CD14-positive monocyte (primary cell): ENCODE measurements at regions of chr16 and their contacts with region 1.

Region 1: GRCh38 chr16:25031441-25032307 is 16.5 kb upstream of the ARHGAP17 start:
- DNase-seq: peak; percentile 93 to 97 (median 95)
- H3K4me3 ChIP-seq: peak overlapping the region; percentile 87 to 97 (median 90)
- H3K4me3 Mint-ChIP-seq: peak overlapping the region; percentile 91 to 95
- H3K27ac ChIP-seq: peak overlapping the region; percentile 3 to 86
- H3K27ac Mint-ChIP-seq: peak overlapping the region in 6 of 7 donors; percentile 71 to 96 (median 88)
- H3K4me1 ChIP-seq: peaks cover 20 to 25% of the 10 kb centered on the region in 2 donors
- H3K4me1 Mint-ChIP-seq: peaks cover 35% of the 10 kb centered on the region
- H3K27me3 ChIP-seq: no peaks in the 10 kb centered on the region
- H3K27me3 Mint-ChIP-seq: peaks cover 0 to 1% (median 0%) of the 10 kb centered on the region in 3 donors
- CTCF ChIP-seq: no peak

Region 2: GRCh38 chr16:25045696-25046381 is 14.2 kb after region 1 on chr16:
- intact Hi-C with region 1: loop called in 1 of 2 experiments (anchors 2 kb)
- DNase-seq: peak in 1 of 3 donors; percentile 12
- H3K4me3 ChIP-seq: no peak overlapping the region
- H3K4me3 Mint-ChIP-seq: no peak overlapping the region
- H3K27ac ChIP-seq: no peak overlapping the region
- H3K27ac Mint-ChIP-seq: peak overlapping the region in 3 of 7 donors; percentile 15 to 74 (median 47)
- H3K4me1 ChIP-seq: peaks cover 16 to 34% of the 10 kb centered on the region in 2 donors
- H3K4me1 Mint-ChIP-seq: peaks cover 34% of the 10 kb centered on the region
- H3K27me3 ChIP-seq: no peaks in the 10 kb centered on the region
- H3K27me3 Mint-ChIP-seq: peaks cover 0 to 1% (median 0%) of the 10 kb centered on the region in 3 donors
- CTCF ChIP-seq: no peak